Dendritic cell treated with granulocyte-macrophage colony-stimulating factor and Interleukin-4, amounts not matched to agents 40 ng/mL and 50 ng/mL, for 4 days (primary cell): ENCODE measurements at regions of chr10 and their contacts with region 1.

Region 1: GRCh38 chr10:5446390-5446926 is 34.1 kb downstream of the NET1 start:
- H3K4me3 Mint-ChIP-seq: peak overlapping the region; percentile 81
- H3K27ac Mint-ChIP-seq: peak overlapping the region; percentile 73
- H3K4me1 Mint-ChIP-seq: peaks cover 9% of the 10 kb centered on the region
- H3K27me3 Mint-ChIP-seq: no peaks in the 10 kb centered on the region

Region 2: DNA sequence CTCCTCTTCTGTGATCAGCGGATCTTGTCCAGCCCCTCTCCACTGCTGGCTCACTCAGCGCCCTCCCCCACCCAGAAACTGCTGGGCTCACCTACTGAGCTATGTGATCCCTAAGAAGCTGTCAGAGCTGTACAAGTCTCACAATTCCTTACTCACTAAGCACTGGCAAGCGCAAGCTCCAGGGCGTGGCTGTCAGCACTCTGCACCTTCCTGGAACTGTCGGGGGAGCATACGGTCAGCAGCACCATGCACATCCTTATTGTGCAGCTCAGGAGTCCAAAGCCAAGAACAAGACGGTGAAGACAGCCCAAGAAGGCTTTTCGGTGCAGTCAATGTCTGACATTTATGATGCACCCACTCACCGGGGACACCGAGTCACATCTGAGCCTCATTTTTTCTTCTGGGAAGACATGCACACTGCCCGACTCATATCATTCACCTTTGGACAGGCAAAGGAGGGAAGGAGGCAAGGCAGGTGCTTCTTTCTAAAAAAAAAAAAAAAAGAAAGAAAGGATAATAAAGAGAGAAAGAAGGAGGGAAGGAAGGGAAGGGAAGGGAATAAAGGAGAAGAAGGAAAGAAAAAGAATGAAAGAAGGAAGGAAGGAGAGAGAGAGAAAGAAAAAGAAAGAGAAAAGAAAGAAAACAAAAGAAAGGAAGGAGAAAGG is 163.6 kb after region 1 on chr10:
- intact Hi-C with region 1: loop called (anchors 5 kb)
- H3K4me3 Mint-ChIP-seq: no peak overlapping the region
- H3K27ac Mint-ChIP-seq: no peak overlapping the region
- H3K4me1 Mint-ChIP-seq: peaks cover 32% of the 10 kb centered on the region
- H3K27me3 Mint-ChIP-seq: peaks cover 19% of the 10 kb centered on the region

Region 3: GRCh38 chr10:5623081-5623748 is 176.8 kb after region 1 on chr10:
- intact Hi-C with region 1: loop called (anchors 1 kb)
- H3K4me3 Mint-ChIP-seq: no peak overlapping the region
- H3K27ac Mint-ChIP-seq: no peak overlapping the region
- H3K4me1 Mint-ChIP-seq: peaks cover 13% of the 10 kb centered on the region
- H3K27me3 Mint-ChIP-seq: peaks cover 4% of the 10 kb centered on the region

Region 4: DNA sequence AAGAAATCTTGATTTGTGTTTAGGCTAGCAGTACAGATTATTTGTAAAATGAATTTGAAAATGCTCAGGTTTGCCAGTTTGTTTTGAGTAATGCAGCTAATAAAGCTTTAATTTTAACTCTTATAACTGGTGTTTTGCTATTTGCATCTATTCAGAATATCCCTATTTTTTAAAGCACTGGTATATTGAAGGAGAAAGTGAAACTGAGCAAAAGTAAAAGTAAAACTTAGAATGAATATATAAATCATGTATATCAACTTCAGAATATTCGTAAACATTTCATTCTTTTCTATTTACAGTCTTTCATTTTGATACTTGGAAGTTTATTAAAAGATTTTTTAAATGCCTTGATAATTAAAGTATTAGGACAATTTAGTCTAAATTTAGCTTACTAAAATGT is 264.4 kb after region 1 on chr10:
- intact Hi-C with region 1: no loop called
- H3K4me3 Mint-ChIP-seq: no peak overlapping the region
- H3K27ac Mint-ChIP-seq: no peak overlapping the region
- H3K4me1 Mint-ChIP-seq: peaks cover 29% of the 10 kb centered on the region
- H3K27me3 Mint-ChIP-seq: no peaks in the 10 kb centered on the region